ENCODE measurements at regions of chr11 and their contacts with region 1.

Region 1: DNA sequence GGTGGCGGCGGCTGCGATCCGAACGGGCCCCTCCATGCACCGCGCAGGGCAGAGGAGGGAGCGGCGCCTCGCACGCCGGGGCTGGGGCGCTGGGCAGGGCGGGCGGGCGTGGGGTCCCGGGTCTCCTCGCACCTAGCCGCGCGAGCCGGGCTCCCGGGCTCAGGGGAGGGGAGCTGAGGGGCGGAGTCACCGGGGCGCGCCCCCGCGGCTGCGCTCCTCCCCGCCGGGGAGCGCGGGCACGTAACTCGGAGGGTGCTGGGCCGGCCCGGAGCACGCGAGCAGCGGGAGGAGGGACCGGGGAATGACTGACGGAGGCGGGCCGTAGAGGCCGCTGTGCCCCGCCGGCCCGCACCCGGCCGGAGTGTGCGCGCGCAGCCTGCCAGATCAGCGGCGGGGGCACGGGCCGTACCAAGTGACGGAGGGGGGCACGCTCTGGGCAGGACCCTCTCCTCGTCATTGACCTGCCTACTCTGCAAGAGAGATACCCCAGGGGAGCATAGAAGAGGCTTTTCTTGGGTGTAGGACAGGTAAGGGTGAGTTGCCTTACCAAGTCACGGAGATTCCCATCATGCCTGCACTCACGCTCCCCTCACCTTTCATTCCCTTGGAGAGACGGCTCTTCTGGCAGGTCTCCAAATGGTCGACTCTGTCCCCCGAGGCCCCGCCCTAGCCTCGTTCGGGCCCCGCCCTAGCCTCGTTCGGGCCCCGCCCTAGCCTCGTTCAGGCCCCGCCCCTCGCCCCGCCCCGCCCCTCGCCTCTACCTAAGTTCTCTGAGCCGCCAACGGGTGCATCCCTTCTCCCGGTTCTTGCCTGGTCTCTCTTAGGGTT is at the start of gene CDON:
- DNase-seq: peak; percentile 87
- ATAC-seq: peak; percentile 97
- H3K4me3 ChIP-seq: peak within 1 kb of the TSS; percentile 46 to 57
- H3K27ac ChIP-seq: peak within 1 kb of the TSS; percentile 79
- H3K4me1 ChIP-seq: peaks cover 11 to 16% of the 10 kb centered on the region in 2 experiments
- H3K27me3 ChIP-seq: peaks cover 5% of the 10 kb centered on the region; the same call in 1 of the 2 replicates
- CTCF ChIP-seq: no peak
- POLR2A ChIP-seq: no peak
- RAD21 ChIP-seq: no peak
- total RNA-seq, gene CDON: 16.9 TPM

Region 2: GRCh38 chr11:125923012-125923579 is 139.8 kb before region 1 on chr11:
- CTCF ChIA-PET with region 1: interaction called, 4 read pairs
- POLR2A ChIA-PET with region 1: no interaction called
- RAD21 ChIA-PET with region 1: no interaction called
- intact Hi-C with region 1: loop called (anchors 1 kb)
- DNase-seq: peak; percentile 77
- ATAC-seq: peak; percentile 98
- H3K4me3 ChIP-seq: no peak overlapping the region
- H3K27ac ChIP-seq: no peak overlapping the region
- H3K4me1 ChIP-seq: no peaks in the 10 kb centered on the region
- H3K27me3 ChIP-seq: no peaks in the 10 kb centered on the region
- CTCF ChIP-seq: peak; percentile 75 to 86 (median 86)
- POLR2A ChIP-seq: no peak
- RAD21 ChIP-seq: peak; percentile 95

Region 3: DNA sequence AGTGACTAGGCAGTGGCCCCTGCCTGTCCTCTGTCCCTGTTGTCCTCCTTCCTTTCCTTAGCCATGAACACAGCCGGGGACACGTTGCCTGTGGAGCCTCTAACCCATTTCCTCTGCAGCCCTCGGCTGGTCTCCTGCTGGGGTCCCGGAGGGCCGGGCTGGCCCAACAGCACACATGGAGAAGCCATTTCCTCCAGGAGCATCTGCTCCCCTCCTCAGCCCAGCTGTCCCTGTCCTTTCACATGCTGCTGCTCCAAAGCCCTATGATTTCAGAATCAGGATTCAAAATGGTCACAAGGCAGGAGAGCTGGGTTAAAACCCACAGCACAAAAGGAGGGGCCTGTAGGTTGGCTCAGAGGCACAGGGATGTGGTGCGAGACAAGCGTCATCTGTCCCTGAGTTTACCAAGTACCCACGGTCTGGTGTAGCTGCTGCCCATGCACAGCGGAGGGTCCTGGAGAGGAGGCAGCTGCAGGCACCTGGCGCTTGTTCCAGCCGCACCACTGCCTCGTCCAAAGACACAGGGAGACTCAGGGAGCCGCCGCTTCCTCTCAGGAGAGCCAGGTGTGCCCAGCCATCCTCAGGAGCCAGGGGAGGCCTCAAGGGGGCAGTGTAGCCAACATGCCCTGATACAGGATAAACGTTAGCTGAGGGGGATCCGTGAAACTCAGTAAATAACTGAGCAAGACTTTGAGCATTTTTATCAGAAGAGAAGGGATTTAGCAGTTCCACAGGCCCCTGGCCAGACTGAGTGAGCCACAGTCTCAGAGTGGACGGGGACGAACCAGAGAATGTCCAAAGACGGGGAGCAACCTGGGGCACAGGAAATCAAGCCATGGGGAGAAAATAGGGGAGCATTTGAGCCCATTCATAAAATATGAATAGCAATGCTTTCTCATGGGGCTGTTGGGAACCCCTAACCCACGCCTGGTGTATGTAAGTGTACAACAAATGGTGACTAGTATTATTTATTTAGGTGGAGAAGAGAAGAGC is 121.0 kb before region 1 on chr11:
- CTCF ChIA-PET with region 1: interaction called, 4 read pairs
- POLR2A ChIA-PET with region 1: no interaction called
- RAD21 ChIA-PET with region 1: no interaction called
- intact Hi-C with region 1: loop called (anchors 5 kb)
- DNase-seq: peak; percentile 22
- ATAC-seq: peak; percentile 97
- H3K4me3 ChIP-seq: no peak overlapping the region
- H3K27ac ChIP-seq: no peak overlapping the region
- H3K4me1 ChIP-seq: peaks cover 7 to 22% of the 10 kb centered on the region in 2 experiments
- H3K27me3 ChIP-seq: no peaks in the 10 kb centered on the region
- CTCF ChIP-seq: peak; percentile 64 to 96 (median 87)
- POLR2A ChIP-seq: no peak
- RAD21 ChIP-seq: peak; percentile 70

Region 4: GRCh38 chr11:126146433-126147192 is 83.7 kb after region 1 on chr11:
- CTCF ChIA-PET with region 1: no interaction called
- POLR2A ChIA-PET with region 1: no interaction called
- RAD21 ChIA-PET with region 1: no interaction called
- intact Hi-C with region 1: no loop called
- DNase-seq: no peak
- ATAC-seq: no peak
- H3K4me3 ChIP-seq: no peak overlapping the region
- H3K27ac ChIP-seq: no peak overlapping the region
- H3K4me1 ChIP-seq: peaks cover 5 to 7% of the 10 kb centered on the region in 2 experiments; a peak in 2 of 4 replicates
- H3K27me3 ChIP-seq: 0 out of 2 replicates have a peak, but pooled peaks cover 3% of the 10 kb centered on the region
- CTCF ChIP-seq: no peak
- POLR2A ChIP-seq: no peak
- RAD21 ChIP-seq: no peak

Measured in HCT116 (cell line).